ENCODE measurements at regions of chr12 and their contacts with region 1.

Region 1: GRCh38 chr12:79547735-79548609 is 142.8 kb downstream of the PAWR start:
- DNase-seq: no peak
- ATAC-seq: peak; percentile 83
- H3K4me3 ChIP-seq: no peak overlapping the region
- H3K27ac ChIP-seq: peak overlapping the region; percentile 61 to 96
- H3K4me1 ChIP-seq: peaks cover 9 to 17% of the 10 kb centered on the region in 2 donors
- H3K27me3 ChIP-seq: no peaks in the 10 kb centered on the region

Region 2: GRCh38 chr12:79006306-79006705 is 541.7 kb before region 1 on chr12:
- intact Hi-C with region 1: no loop called
- DNase-seq: no peak
- ATAC-seq: no peak
- H3K4me3 ChIP-seq: no peak overlapping the region
- H3K27ac ChIP-seq: no peak overlapping the region
- H3K4me1 ChIP-seq: no peaks in the 10 kb centered on the region
- H3K27me3 ChIP-seq: no peaks in the 10 kb centered on the region

Region 3: GRCh38 chr12:79420146-79420618 is 127.8 kb before region 1 on chr12:
- intact Hi-C with region 1: loop called (anchors 2 kb)
- DNase-seq: no peak
- ATAC-seq: peak; percentile 46
- H3K4me3 ChIP-seq: no peak overlapping the region
- H3K27ac ChIP-seq: peak overlapping the region in 1 of 2 donors; percentile 36
- H3K4me1 ChIP-seq: peaks cover 1 to 8% of the 10 kb centered on the region in 2 donors
- H3K27me3 ChIP-seq: no peaks in the 10 kb centered on the region

Region 4: GRCh38 chr12:79776111-79776510 is 228.1 kb after region 1 on chr12:
- intact Hi-C with region 1: no loop called
- DNase-seq: no peak
- ATAC-seq: no peak
- H3K4me3 ChIP-seq: no peak overlapping the region
- H3K27ac ChIP-seq: no peak overlapping the region
- H3K4me1 ChIP-seq: no peaks in the 10 kb centered on the region
- H3K27me3 ChIP-seq: no peaks in the 10 kb centered on the region